IMR-90 (cell line): ENCODE measurements at regions of chr17 and their contacts with region 1.

Region 1: DNA sequence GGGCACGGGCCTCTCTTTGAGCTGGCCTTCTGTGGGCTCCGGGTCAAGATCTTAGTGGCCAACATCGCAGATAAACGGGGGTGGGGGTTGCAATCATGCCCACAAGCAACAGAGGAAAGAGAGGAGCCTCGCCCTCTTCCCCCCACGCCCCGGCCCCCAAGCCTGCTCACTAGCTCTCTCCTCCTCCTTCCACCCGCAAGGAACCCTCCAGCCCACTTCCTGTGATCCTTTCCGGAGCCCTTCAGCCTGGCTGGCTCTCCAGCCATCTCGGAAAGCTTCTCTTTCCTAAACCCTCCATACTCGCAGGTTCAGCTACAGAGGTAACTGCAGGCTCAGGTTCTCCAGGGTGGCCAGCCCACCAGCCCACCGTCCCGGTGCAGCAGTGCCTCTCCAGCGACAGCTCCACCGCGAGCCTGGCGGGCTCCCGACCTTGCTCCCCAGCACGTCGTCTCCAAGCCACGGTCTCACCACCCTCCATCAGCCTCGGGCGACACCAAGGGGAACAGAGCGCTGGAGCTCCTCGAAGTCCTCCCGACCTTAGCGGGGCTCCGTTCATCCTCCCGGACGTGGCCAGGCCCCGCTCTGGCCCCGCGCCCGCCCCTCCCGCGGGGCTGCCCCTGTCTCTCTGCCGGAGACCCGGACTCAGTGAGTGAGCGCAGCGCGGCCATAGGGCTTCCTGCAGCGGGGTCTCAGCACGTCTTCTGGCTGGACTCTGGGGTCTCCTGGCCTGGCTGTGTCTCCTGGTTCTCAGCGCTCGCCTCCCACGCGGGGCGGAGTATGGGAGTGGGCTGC is 12.9 kb upstream of the ODF4 start:
- DNase-seq: no peak
- ATAC-seq: peak; percentile 84
- H3K4me3 ChIP-seq: peak overlapping the region; percentile 33
- H3K27ac ChIP-seq: peak overlapping the region; percentile 29; the same call in 1 of the 2 replicates
- H3K4me1 ChIP-seq: peaks cover 2% of the 10 kb centered on the region; the same call in 1 of the 2 replicates
- H3K27me3 ChIP-seq: peaks cover 10% of the 10 kb centered on the region; the same call in 1 of the 2 replicates
- CTCF ChIP-seq: no peak
- POLR2A ChIP-seq: no peak
- RAD21 ChIP-seq: no peak

Region 2: DNA sequence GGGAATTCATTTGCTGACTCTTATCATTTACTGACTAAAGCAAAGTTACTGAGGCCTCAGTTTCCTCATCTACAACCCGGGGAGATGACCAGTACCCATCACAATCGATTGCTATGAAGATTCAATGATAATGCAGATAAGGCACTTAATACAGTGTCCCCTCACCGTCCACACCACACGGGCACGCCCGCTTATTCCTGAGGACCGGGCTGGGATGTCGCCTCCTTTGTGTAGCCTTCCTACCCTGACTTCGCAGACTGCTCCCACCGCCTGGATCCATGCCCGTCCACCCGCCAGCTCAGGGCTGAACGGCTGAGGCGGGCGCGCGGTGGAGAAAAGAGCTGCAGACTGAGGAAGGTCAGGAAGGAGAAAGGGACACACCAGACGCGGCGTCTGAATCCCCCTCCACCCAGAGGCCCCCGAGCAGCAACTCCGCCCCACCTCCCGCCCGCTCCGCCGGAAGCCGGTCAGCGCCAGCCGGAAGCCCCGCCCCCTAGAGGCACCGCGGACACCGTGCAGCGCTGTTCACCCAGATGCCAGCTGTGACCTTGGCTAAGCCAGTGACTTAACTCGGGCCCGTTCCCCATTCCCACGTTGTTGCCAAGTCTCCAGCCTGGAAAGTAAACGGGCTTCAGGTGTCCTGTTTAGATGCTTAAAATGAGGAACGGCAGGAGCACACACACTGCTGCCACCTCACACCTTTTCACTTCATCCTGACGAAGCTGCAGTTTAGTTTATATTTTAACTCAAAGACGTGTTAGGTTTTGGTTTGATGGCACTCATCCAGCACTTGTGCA is 49.8 kb after region 1 on chr17 and contains the start of gene KRABD2:
- CTCF ChIA-PET with region 1: no interaction called
- POLR2A ChIA-PET with region 1: no interaction called
- dilution Hi-C with region 1: no loop called
- in situ Hi-C with region 1: no loop called
- intact Hi-C with region 1: loop called (anchors 1 kb)
- DNase-seq: peak; percentile 79
- ATAC-seq: peak; percentile 97
- H3K4me3 ChIP-seq: peak within 1 kb of the TSS; percentile 85
- H3K27ac ChIP-seq: peak within 1 kb of the TSS; percentile 97
- H3K4me1 ChIP-seq: peaks cover 6% of the 10 kb centered on the region
- H3K27me3 ChIP-seq: no peaks in the 10 kb centered on the region
- CTCF ChIP-seq: peak; percentile 66
- POLR2A ChIP-seq: peak; percentile 69; the same call in 1 of the 2 replicates
- RAD21 ChIP-seq: no peak

Region 3: GRCh38 chr17:8522577-8522976 is 195.9 kb after region 1 on chr17:
- CTCF ChIA-PET with region 1: no interaction called
- POLR2A ChIA-PET with region 1: no interaction called
- dilution Hi-C with region 1: no loop called
- in situ Hi-C with region 1: no loop called
- intact Hi-C with region 1: no loop called
- DNase-seq: no peak
- ATAC-seq: no peak
- H3K4me3 ChIP-seq: no peak overlapping the region
- H3K27ac ChIP-seq: no peak overlapping the region
- H3K4me1 ChIP-seq: no peaks in the 10 kb centered on the region
- H3K27me3 ChIP-seq: no peaks in the 10 kb centered on the region
- CTCF ChIP-seq: no peak
- POLR2A ChIP-seq: no peak
- RAD21 ChIP-seq: no peak